Activated CD4-positive, alpha-beta T cell treated with anti-CD3 and anti-CD28 coated beads, Interleukin-2, amount 10 ng/mL, durations not matched to agents 7 days and 5 days (primary cell): ENCODE measurements at regions of chr2 and their contacts with region 1.

Region 1: GRCh38 chr2:1115843-1116539 is 165.3 kb downstream of the SNTG2 start:
- DNase-seq: no peak
- H3K4me3 Mint-ChIP-seq: no peak overlapping the region
- H3K27ac Mint-ChIP-seq: no peak overlapping the region
- H3K4me1 Mint-ChIP-seq: no peaks in the 10 kb centered on the region
- H3K27me3 Mint-ChIP-seq: no peaks in the 10 kb centered on the region

Region 2: DNA sequence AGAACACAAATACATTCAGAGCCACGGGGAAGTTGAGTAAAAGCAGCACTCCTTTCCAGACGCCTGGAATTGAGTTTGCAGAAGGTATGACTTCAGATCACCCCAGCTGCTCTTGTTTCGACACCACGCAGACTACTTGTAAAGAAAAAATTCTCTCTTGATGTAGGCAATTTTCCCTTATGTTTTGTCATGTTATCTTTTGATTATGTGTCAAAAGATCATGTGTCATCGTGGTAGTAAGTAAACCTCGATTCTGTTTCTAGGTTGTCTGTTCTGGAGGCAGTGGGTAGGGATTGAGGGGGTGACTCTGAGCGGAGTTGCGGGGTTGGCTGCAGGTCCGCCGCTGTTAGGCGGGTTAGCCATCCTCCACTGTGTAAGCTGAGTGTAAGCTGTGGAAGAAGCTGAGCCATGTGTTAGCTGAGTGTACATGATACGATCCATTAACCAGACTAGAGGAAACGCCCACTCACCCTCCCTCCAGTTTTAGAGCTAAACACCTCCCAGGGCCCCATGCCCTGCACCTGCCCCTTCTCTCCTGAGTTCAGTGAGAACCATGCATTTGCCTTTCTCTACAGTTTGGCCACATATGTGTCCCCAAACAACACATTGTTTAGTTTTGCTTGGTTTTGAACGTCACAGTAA is 16.5 kb after region 1 on chr2:
- CTCF ChIA-PET with region 1: no interaction called
- POLR2A ChIA-PET with region 1: no interaction called
- DNase-seq: no peak
- H3K4me3 Mint-ChIP-seq: no peak overlapping the region
- H3K27ac Mint-ChIP-seq: no peak overlapping the region
- H3K4me1 Mint-ChIP-seq: peaks cover 13% of the 10 kb centered on the region
- H3K27me3 Mint-ChIP-seq: peaks cover 9% of the 10 kb centered on the region

Region 3: GRCh38 chr2:1227274-1227900 is 111.4 kb after region 1 on chr2:
- CTCF ChIA-PET with region 1: no interaction called
- POLR2A ChIA-PET with region 1: no interaction called
- DNase-seq: no peak
- H3K4me3 Mint-ChIP-seq: no peak overlapping the region
- H3K27ac Mint-ChIP-seq: no peak overlapping the region
- H3K4me1 Mint-ChIP-seq: no peaks in the 10 kb centered on the region
- H3K27me3 Mint-ChIP-seq: no peaks in the 10 kb centered on the region

Region 4: GRCh38 chr2:1268034-1268433 is 152.0 kb after region 1 on chr2:
- CTCF ChIA-PET with region 1: no interaction called
- POLR2A ChIA-PET with region 1: interaction called, 11 read pairs
- DNase-seq: no peak
- H3K4me3 Mint-ChIP-seq: no peak overlapping the region
- H3K27ac Mint-ChIP-seq: no peak overlapping the region
- H3K4me1 Mint-ChIP-seq: no peaks in the 10 kb centered on the region
- H3K27me3 Mint-ChIP-seq: no peaks in the 10 kb centered on the region

Region 5: DNA sequence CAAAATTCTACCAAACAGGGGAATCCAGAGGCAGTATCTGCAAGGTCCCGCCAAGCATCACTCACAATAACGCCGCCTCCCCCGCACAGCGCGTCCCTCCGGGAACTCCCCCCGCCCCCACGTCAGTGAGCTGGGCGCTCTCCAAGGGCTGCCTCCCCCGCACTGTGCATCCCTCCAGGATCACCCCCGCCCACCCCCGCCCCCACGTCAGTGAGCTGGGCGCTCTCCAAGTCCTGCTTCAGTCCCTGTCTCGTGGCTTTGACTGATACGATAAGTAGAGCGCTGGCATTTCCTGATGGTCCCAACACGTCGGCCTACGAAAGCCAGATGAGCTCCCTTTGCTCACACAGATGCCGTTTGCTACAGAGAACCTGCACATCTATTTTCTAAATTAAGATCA is 166.6 kb after region 1 on chr2:
- CTCF ChIA-PET with region 1: no interaction called
- POLR2A ChIA-PET with region 1: no interaction called
- DNase-seq: no peak
- H3K4me3 Mint-ChIP-seq: no peak overlapping the region
- H3K27ac Mint-ChIP-seq: no peak overlapping the region
- H3K4me1 Mint-ChIP-seq: no peaks in the 10 kb centered on the region
- H3K27me3 Mint-ChIP-seq: no peaks in the 10 kb centered on the region